Activated CD4-positive, alpha-beta T cell treated with anti-CD3 and anti-CD28 coated beads for 36 hours (primary cell): ENCODE measurements at regions of chr6 and their contacts with region 1.

Region 1: DNA sequence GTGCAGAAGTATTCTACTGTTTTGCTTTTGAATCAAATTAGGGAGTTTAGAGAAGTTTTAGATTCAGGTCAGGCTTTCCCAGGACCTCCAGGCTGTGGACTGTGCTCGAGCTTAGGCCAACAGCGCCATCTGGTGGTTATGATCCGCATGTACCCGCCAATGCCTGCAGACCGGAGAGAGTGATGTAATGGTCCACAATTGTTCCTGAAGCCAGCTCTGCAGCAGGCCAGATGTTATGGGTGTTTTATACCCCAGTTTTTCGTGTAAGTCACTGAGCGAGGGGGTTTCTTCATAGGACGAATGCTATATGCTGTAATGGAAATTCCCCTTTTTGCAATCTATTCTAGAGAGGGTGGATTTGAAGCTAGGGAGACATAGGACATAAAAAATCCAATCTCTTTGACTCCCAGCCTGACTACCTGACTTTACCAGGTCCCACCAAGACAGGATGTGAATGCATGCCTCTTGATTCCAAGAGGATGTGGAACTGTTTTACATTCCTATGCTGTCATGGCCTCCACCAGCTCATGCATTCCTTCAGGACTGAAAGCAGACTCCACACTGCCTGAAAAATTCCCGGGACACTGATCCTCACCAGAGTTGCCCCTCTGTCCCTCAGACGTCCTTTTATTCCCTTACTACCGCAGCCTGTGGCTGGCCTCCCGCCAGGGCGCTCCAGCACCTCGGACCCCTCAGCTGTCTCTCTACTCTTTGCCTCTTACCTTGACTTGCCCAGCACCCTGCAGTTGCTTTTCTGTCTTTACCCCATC is 41.2 kb upstream of the LY86 start:
- DNase-seq: peak; percentile 90
- ATAC-seq: peak; percentile 95
- H3K4me3 Mint-ChIP-seq: peak overlapping the region; percentile 51
- H3K27ac Mint-ChIP-seq: no peak overlapping the region
- H3K4me1 Mint-ChIP-seq: peaks cover 2% of the 10 kb centered on the region
- H3K27me3 Mint-ChIP-seq: peaks cover 29% of the 10 kb centered on the region

Region 2: DNA sequence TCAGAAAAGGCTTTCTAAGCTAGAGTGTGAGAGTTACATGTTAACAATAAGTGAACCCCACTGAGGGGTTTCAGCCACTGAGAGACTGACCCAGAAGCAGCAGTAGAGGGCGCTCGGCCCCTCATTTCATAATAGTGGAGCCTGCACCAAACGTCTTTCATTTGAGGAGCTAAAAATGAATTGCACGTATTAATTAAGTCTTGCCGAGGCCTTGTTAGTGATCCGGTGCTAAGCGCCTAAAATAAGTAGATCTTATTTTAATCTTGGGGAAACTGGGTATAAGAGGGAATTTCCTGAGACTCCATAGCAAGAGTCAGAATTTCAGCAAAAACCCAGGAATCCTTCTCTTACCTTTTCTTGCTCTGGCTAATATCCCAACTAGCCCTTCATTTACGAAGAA is 1076.3 kb before region 1 on chr6:
- CTCF ChIA-PET with region 1: interaction called, 3 read pairs
- POLR2A ChIA-PET with region 1: no interaction called
- intact Hi-C with region 1: loop called in 1 of 2 experiments (anchors 2 kb)
- DNase-seq: peak; percentile 79
- ATAC-seq: peak; percentile 89
- H3K4me3 Mint-ChIP-seq: no peak overlapping the region
- H3K27ac Mint-ChIP-seq: no peak overlapping the region
- H3K4me1 Mint-ChIP-seq: peaks cover 4% of the 10 kb centered on the region
- H3K27me3 Mint-ChIP-seq: no peaks in the 10 kb centered on the region

Region 3: GRCh38 chr6:6131492-6132109 is 415.7 kb before region 1 on chr6:
- CTCF ChIA-PET with region 1: interaction called, 4 read pairs
- POLR2A ChIA-PET with region 1: no interaction called
- intact Hi-C with region 1: loop called in 1 of 2 experiments (anchors 2 kb)
- DNase-seq: peak; percentile 11
- ATAC-seq: no peak
- H3K4me3 Mint-ChIP-seq: no peak overlapping the region
- H3K27ac Mint-ChIP-seq: no peak overlapping the region
- H3K4me1 Mint-ChIP-seq: no peaks in the 10 kb centered on the region
- H3K27me3 Mint-ChIP-seq: peaks cover 5% of the 10 kb centered on the region

Region 4: DNA sequence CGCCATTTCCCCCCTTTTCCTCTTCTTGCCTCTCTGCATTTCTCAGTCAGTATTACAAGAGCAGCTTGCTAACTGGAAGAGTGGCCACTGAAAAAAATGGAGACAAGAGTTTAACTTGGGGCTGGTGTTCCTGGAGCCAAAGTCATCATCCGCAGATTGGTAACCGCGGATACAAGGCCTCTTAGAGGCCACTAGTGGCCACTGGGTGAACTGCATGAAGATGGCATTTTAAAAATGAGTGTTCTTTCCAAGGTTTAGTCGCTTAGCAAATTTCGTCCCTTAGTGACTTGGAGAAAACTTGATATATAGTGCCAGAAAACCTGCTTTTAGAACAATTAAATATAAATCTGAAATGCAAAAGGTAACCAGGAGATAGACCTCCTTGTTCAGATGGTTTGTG is 231.6 kb before region 1 on chr6:
- CTCF ChIA-PET with region 1: interaction called, 3 read pairs
- POLR2A ChIA-PET with region 1: no interaction called
- intact Hi-C with region 1: loop called (anchors 2 kb)
- DNase-seq: peak; percentile 58
- ATAC-seq: peak; percentile 33
- H3K4me3 Mint-ChIP-seq: no peak overlapping the region
- H3K27ac Mint-ChIP-seq: no peak overlapping the region
- H3K4me1 Mint-ChIP-seq: no peaks in the 10 kb centered on the region
- H3K27me3 Mint-ChIP-seq: peaks cover 39% of the 10 kb centered on the region

Region 5: DNA sequence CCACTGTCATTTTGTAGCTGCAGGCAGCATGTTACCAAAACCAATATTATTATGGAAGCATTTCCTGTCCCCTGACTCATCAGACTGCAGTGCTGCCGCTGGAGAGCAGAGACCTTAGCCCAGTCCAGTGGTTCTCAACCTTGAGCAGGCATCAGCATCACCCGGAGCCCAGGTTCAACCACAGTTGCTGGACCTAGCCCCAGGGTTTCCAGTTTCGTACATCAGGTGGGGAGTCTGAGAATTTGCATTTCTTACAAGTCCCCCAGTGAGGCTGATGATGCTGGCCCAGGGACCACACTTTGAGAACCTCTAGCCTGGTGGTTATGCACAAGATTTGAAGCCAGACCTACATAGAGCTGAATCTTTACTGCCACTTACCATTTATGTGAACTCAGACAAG is 88.6 kb after region 1 on chr6:
- CTCF ChIA-PET with region 1: no interaction called
- POLR2A ChIA-PET with region 1: no interaction called
- intact Hi-C with region 1: no loop called
- DNase-seq: no peak
- ATAC-seq: no peak
- H3K4me3 Mint-ChIP-seq: no peak overlapping the region
- H3K27ac Mint-ChIP-seq: no peak overlapping the region
- H3K4me1 Mint-ChIP-seq: peaks cover 21% of the 10 kb centered on the region
- H3K27me3 Mint-ChIP-seq: no peaks in the 10 kb centered on the region